Heart right ventricle (tissue), 16 donors: ENCODE measurements at regions of chrX and their contacts with region 1.

Region 1: GRCh38 chrX:43703211-43703791 is 47.2 kb downstream of the MAOA start:
- DNase-seq: no peak
- ATAC-seq: peak; percentile 39 to 72 (median 56)
- H3K4me3 ChIP-seq: no peak overlapping the region
- H3K27ac ChIP-seq: peak overlapping the region; percentile 12 to 85 (median 71)
- H3K4me1 ChIP-seq: peaks cover 0 to 52% (median 29%) of the 10 kb centered on the region in 9 donors
- H3K27me3 ChIP-seq: peaks cover 0 to 62% (median 0%) of the 10 kb centered on the region in 7 donors
- CTCF ChIP-seq: no peak

Region 2: GRCh38 chrX:43741843-43742573 is 38.7 kb after region 1 on chrX:
- intact Hi-C with region 1: loop called in 1 of 10 experiments (anchors 5 kb)
- DNase-seq: peak in 1 of 2 donors; percentile 24
- ATAC-seq: peak; percentile 67 to 94 (median 87)
- H3K4me3 ChIP-seq: no peak overlapping the region
- H3K27ac ChIP-seq: peak overlapping the region in 5 of 10 donors; percentile 10 to 47 (median 37)
- H3K4me1 ChIP-seq: peaks cover 0 to 26% (median 11%) of the 10 kb centered on the region in 9 donors
- H3K27me3 ChIP-seq: peaks cover 0 to 46% (median 0%) of the 10 kb centered on the region in 7 donors
- CTCF ChIP-seq: no peak